AG04449 (cell line): ENCODE measurements at regions of chr1 and their contacts with region 1.

Region 1: GRCh38 chr1:43367904-43368645 is at the start of gene ELOVL1:
- DNase-seq: no peak
- H3K4me3 ChIP-seq: peak within 1 kb of the TSS; percentile 74
- CTCF ChIP-seq: peak; percentile 45

Region 2: DNA sequence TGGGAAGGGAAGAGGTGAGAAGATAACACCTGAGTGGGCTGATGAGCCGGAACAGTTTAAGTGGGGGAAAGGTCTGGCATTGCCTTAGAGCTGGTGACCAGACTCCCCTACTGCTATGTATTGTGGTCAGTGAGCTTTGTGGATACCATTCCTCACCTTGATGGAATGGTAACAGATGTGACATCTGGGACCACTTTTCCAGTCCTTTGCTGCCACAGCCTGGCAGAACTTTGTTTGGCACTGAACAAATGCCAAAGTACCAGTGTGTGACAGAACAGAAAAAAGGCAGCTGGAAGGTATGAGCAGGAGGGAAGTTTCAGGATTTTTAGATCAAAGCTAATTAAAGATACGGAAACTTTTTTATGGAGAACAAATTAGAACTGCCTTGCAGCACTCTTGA is 15.4 kb after region 1 on chr1:
- CTCF ChIA-PET with region 1: interaction called, 15 read pairs
- POLR2A ChIA-PET with region 1: interaction called, 10 read pairs
- DNase-seq: no peak
- H3K4me3 ChIP-seq: no peak overlapping the region
- CTCF ChIP-seq: no peak